ENCODE measurements at regions of chr5 and their contacts with region 1.

Region 1: GRCh38 chr5:68252673-68253623 is 37.4 kb downstream of the PIK3R1 start:
- DNase-seq: peak; percentile 73
- H3K4me3 ChIP-seq: no peak overlapping the region
- H3K27ac ChIP-seq: no peak overlapping the region
- H3K4me1 ChIP-seq: peaks cover 48% of the 10 kb centered on the region
- H3K27me3 ChIP-seq: no peaks in the 10 kb centered on the region
- CTCF ChIP-seq: peak; percentile 79 to 80
- POLR2A ChIP-seq: no peak

Region 2: GRCh38 chr5:67209142-67209771 is 1043.7 kb before region 1 on chr5:
- CTCF ChIA-PET with region 1: interaction called, 24 read pairs
- POLR2A ChIA-PET with region 1: interaction called, 3 read pairs
- dilution Hi-C with region 1: no loop called
- intact Hi-C with region 1: no loop called
- DNase-seq: peak; percentile 77
- H3K4me3 ChIP-seq: no peak overlapping the region
- H3K27ac ChIP-seq: no peak overlapping the region
- H3K4me1 ChIP-seq: peaks cover 3% of the 10 kb centered on the region
- H3K27me3 ChIP-seq: no peaks in the 10 kb centered on the region
- CTCF ChIP-seq: peak; percentile 67
- POLR2A ChIP-seq: no peak

Region 3: GRCh38 chr5:67404256-67405100 is 848.5 kb before region 1 on chr5:
- CTCF ChIA-PET with region 1: no interaction called
- POLR2A ChIA-PET with region 1: no interaction called
- dilution Hi-C with region 1: no loop called
- intact Hi-C with region 1: loop called (anchors 5 kb)
- DNase-seq: peak; percentile 90
- H3K4me3 ChIP-seq: no peak overlapping the region
- H3K27ac ChIP-seq: peak overlapping the region; percentile 100
- H3K4me1 ChIP-seq: peaks cover 35% of the 10 kb centered on the region
- H3K27me3 ChIP-seq: no peaks in the 10 kb centered on the region
- CTCF ChIP-seq: no peak
- POLR2A ChIP-seq: no peak

Region 4: DNA sequence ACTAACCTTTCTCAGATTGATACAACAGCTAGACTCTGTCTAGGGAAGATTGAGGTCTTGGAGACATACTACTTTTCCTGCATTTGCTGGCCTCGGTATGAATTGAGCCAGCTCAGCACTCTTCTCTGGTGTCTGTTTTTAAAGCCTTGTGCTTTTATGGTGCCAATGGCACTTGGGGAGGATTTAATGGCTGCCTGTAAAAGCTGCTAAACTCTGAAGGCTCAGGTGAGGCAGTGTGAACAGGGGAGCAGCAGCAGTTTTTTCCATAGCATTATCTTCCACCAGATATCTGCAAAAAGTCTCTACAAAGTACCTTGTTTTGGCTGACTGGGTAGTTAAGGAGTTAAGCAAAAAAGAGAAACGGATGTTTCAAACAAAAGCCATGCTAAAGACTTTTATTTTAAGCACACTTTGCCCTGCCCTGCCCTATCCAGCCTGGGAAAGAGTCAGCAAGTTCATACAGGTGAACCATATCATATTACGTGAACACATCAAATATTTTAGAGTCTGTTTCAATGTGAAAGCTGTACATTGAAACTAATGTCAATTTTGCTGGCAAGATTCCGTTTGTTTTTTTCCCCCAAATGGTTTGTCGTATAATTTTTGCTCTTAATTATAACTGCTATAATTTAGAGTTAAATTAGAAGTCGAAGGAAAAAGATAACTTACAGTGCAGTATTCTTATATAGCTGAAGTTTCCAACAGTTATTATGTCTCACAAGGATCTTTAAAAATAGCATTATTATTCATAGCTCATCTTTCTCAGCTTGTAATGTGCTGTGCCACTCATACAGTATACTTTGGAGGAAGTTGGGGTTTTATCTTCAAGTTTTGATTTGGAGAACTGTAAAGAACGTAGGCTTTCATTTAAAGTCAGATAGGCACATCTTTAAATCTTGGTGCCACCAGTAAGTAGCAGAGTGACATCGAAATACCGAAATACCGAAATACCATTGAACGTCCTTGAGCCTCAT is 632.2 kb before region 1 on chr5:
- CTCF ChIA-PET with region 1: no interaction called
- POLR2A ChIA-PET with region 1: no interaction called
- dilution Hi-C with region 1: no loop called
- intact Hi-C with region 1: no loop called
- DNase-seq: no peak
- H3K4me3 ChIP-seq: no peak overlapping the region
- H3K27ac ChIP-seq: no peak overlapping the region
- H3K4me1 ChIP-seq: no peaks in the 10 kb centered on the region
- H3K27me3 ChIP-seq: no peaks in the 10 kb centered on the region
- CTCF ChIP-seq: no peak
- POLR2A ChIP-seq: no peak

Region 5: DNA sequence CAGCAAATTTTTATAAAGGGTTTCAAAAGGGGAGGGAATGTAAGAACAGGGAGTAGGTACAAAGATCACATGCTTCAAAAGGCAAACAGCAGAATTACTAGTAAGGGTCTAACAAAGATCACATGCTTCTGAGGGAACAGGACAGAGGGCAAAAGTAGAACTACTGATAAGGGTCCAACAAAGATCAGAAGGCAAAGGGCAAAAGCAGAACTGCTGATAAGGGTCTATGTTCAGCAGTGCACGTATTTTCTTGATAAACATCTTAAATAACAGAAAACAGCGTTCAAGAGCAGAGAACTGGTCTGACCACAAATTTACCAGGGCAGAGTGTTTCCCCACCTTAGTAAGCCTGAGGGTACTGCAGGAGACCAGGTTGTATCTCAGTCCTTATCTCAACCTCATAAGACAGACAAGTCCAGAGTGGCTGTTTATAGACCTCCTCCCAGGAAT is 506.8 kb before region 1 on chr5:
- CTCF ChIA-PET with region 1: no interaction called
- POLR2A ChIA-PET with region 1: no interaction called
- dilution Hi-C with region 1: no loop called
- intact Hi-C with region 1: no loop called
- DNase-seq: no peak
- H3K4me3 ChIP-seq: no peak overlapping the region
- H3K27ac ChIP-seq: no peak overlapping the region
- H3K4me1 ChIP-seq: no peaks in the 10 kb centered on the region
- H3K27me3 ChIP-seq: no peaks in the 10 kb centered on the region
- CTCF ChIP-seq: no peak
- POLR2A ChIP-seq: no peak

Region 6: DNA sequence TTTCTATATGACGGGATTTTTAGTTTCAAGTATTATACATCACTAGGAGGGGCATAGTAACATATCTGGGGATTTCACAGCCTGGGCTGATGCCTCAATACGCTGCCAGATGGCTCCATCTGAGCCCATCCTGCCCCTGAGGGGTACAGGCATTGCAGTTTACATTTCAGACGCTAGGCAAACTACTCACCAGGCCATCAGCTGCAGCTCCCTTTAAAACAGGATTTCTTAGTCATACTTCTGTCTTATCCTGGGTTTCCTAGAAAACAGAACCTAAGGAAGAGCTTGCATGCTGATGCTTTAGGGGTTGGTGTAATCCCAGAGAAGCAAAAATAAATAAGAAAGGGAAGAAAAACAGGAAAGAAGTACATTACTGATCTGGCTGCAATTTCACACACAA is 410.1 kb before region 1 on chr5:
- CTCF ChIA-PET with region 1: interaction called, 11 read pairs
- POLR2A ChIA-PET with region 1: no interaction called
- dilution Hi-C with region 1: no loop called
- intact Hi-C with region 1: no loop called
- DNase-seq: peak; percentile 40
- H3K4me3 ChIP-seq: no peak overlapping the region
- H3K27ac ChIP-seq: no peak overlapping the region
- H3K4me1 ChIP-seq: peaks cover 7% of the 10 kb centered on the region
- H3K27me3 ChIP-seq: no peaks in the 10 kb centered on the region
- CTCF ChIP-seq: peak; percentile 20 to 25
- POLR2A ChIP-seq: no peak

Region 7: DNA sequence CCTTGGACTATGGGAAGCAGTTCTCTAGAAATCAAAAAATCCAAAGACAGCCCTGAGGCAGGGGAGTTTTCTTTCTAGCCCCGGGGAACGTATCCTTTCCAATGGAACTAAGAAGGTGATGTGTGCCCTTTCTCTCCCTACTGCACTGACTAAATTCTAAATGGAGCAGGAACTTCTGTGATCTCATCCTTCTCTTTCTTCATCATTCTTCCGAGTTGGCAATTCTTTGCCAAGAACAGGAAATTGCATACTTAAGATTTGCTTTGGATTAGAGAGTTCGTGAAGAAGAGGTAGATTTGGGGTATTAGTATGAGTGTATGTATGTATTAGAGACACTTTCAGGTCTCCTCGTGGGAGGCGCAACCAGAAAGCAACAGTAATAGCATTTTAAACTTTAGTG is 215.4 kb before region 1 on chr5:
- CTCF ChIA-PET with region 1: no interaction called
- POLR2A ChIA-PET with region 1: no interaction called
- dilution Hi-C with region 1: no loop called
- intact Hi-C with region 1: no loop called
- DNase-seq: no peak
- H3K4me3 ChIP-seq: no peak overlapping the region
- H3K27ac ChIP-seq: no peak overlapping the region
- H3K4me1 ChIP-seq: peaks cover 2% of the 10 kb centered on the region
- H3K27me3 ChIP-seq: no peaks in the 10 kb centered on the region
- CTCF ChIP-seq: no peak
- POLR2A ChIP-seq: no peak

Region 8: GRCh38 chr5:68215208-68215897 is 37.6 kb before region 1 on chr5 and contains the start of gene PIK3R1:
- CTCF ChIA-PET with region 1: interaction called, 66 read pairs
- POLR2A ChIA-PET with region 1: interaction called, 9 read pairs
- dilution Hi-C with region 1: no loop called
- intact Hi-C with region 1: loop called (anchors 1 kb)
- DNase-seq: peak; percentile 96
- H3K4me3 ChIP-seq: peak within 1 kb of the TSS; percentile 52 to 91 (median 91)
- H3K27ac ChIP-seq: peak within 1 kb of the TSS; percentile 93
- H3K4me1 ChIP-seq: peaks cover 17% of the 10 kb centered on the region
- H3K27me3 ChIP-seq: no peaks in the 10 kb centered on the region
- CTCF ChIP-seq: peak; percentile 32 to 49
- POLR2A ChIP-seq: peak; percentile 93
- total RNA-seq, gene PIK3R1: 27.5 and 30.0 TPM in 2 replicates